B cell (primary cell): ENCODE measurements at regions of chr22 and their contacts with region 1.

Region 1: DNA sequence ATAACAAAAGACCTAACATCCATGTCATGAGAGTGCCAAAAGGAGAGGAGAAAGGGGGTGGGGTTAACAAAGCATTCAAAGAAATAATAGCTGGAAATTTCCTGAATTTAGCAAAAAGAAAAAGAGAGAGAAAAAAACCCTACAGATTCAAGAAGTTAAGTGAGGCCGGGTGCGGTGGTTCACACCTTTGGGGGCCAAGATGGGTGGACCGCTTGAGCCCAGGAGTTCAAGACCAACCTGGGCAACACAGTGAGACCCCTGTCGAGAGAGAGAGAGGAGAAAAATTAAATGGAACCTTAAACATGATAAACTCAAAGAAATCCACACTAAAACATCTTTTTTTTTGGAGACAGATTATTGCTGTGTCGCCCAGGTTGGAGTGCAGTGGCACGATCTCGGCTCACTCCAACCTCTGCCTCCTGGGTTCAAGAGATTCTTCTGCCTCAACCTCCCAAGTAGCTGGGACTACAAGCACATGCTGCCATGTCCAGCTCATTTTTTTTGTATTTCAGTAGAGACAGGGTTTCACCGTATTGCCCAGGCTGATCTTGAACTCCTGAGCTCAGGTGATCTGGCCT is 8.9 kb upstream of the CLDN5 start:
- DNase-seq: no peak
- ATAC-seq: no peak
- H3K4me3 ChIP-seq: no peak overlapping the region
- H3K4me3 Mint-ChIP-seq: no peak overlapping the region
- H3K27ac ChIP-seq: no peak overlapping the region
- H3K27ac Mint-ChIP-seq: no peak overlapping the region
- H3K4me1 ChIP-seq: no peaks in the 10 kb centered on the region
- H3K4me1 Mint-ChIP-seq: no peaks in the 10 kb centered on the region
- H3K27me3 ChIP-seq: peaks cover 0 to 4% (median 0%) of the 10 kb centered on the region in 4 experiments
- H3K27me3 Mint-ChIP-seq: peaks cover 17% of the 10 kb centered on the region
- CTCF ChIP-seq: no peak

Region 2: GRCh38 chr22:19543970-19544708 is 11.0 kb after region 1 on chr22:
- CTCF ChIA-PET with region 1: no interaction called
- POLR2A ChIA-PET with region 1: interaction called, 10 read pairs
- intact Hi-C with region 1: no loop called
- DNase-seq: no peak
- ATAC-seq: no peak
- H3K4me3 ChIP-seq: no peak overlapping the region
- H3K4me3 Mint-ChIP-seq: no peak overlapping the region
- H3K27ac ChIP-seq: no peak overlapping the region
- H3K27ac Mint-ChIP-seq: no peak overlapping the region
- H3K4me1 ChIP-seq: no peaks in the 10 kb centered on the region
- H3K4me1 Mint-ChIP-seq: no peaks in the 10 kb centered on the region
- H3K27me3 ChIP-seq: no peaks in the 10 kb centered on the region
- H3K27me3 Mint-ChIP-seq: peaks cover 21% of the 10 kb centered on the region
- CTCF ChIP-seq: no peak

Region 3: GRCh38 chr22:19586922-19587684 is 54.0 kb after region 1 on chr22:
- CTCF ChIA-PET with region 1: no interaction called
- POLR2A ChIA-PET with region 1: no interaction called
- intact Hi-C with region 1: no loop called
- DNase-seq: no peak
- ATAC-seq: no peak
- H3K4me3 ChIP-seq: no peak overlapping the region
- H3K4me3 Mint-ChIP-seq: no peak overlapping the region
- H3K27ac ChIP-seq: no peak overlapping the region
- H3K27ac Mint-ChIP-seq: no peak overlapping the region
- H3K4me1 ChIP-seq: no peaks in the 10 kb centered on the region
- H3K4me1 Mint-ChIP-seq: no peaks in the 10 kb centered on the region
- H3K27me3 ChIP-seq: no peaks in the 10 kb centered on the region
- H3K27me3 Mint-ChIP-seq: peaks cover 23% of the 10 kb centered on the region
- CTCF ChIP-seq: no peak